Common myeloid progenitor, CD34-positive (primary cell): ENCODE measurements at regions of chr5 and their contacts with region 1.

Region 1: GRCh38 chr5:172437445-172438308 is 16.6 kb downstream of the SH3PXD2B start:
- DNase-seq: peak; percentile 82 to 92 (median 91)
- H3K4me3 ChIP-seq: no peak overlapping the region
- H3K27ac ChIP-seq: no peak overlapping the region
- H3K4me1 ChIP-seq: peaks cover 0 to 13% (median 9%) of the 10 kb centered on the region in 4 experiments
- H3K27me3 ChIP-seq: peaks cover 0 to 7% (median 1%) of the 10 kb centered on the region in 5 experiments

Region 2: DNA sequence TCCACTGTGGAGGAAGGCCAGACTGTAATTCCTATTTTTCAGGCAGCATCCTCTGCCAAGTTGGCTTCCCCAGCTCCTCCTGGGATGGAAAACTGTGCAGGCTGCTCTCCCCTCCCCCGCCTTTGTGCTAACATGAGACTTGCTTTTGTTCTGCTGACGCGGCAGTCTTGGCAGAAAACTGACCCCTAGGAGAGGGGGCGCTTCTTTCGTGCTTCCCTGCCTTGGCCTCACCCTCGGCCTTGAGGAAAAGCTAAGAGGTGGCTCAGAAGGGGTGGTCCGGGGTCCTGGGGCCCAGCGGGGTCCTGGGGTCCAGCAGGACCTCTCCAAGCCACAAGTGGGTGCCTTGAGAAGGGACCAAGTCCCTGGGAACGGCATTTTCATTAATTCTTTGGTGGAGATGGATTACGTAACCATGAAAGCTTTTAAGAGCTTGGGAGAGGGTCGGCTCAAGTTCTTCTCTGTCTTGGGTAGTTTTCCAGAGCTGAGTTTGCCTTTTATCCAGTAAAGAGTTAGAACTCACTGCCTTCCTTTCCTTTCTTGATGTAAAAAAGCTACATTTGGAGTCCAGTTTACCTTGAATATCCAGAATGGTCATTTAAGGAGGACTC is 34.4 kb before region 1 on chr5:
- CTCF ChIA-PET with region 1: no interaction called
- POLR2A ChIA-PET with region 1: no interaction called
- DNase-seq: no peak
- H3K4me3 ChIP-seq: no peak overlapping the region
- H3K27ac ChIP-seq: no peak overlapping the region
- H3K4me1 ChIP-seq: no peaks in the 10 kb centered on the region
- H3K27me3 ChIP-seq: peaks cover 0 to 8% (median 0%) of the 10 kb centered on the region in 5 experiments

Region 3: GRCh38 chr5:172450861-172451695 is 13.4 kb after region 1 on chr5:
- CTCF ChIA-PET with region 1: interaction called, 21 read pairs
- POLR2A ChIA-PET with region 1: interaction called, 3 read pairs
- DNase-seq: peak in 2 of 3 donors; percentile 59 to 65
- H3K4me3 ChIP-seq: no peak overlapping the region
- H3K27ac ChIP-seq: no peak overlapping the region
- H3K4me1 ChIP-seq: peaks cover 3 to 32% (median 17%) of the 10 kb centered on the region in 4 experiments
- H3K27me3 ChIP-seq: peaks cover 0 to 18% (median 4%) of the 10 kb centered on the region in 5 experiments